ENCODE measurements at regions of chr14 and their contacts with region 1.

Region 1: DNA sequence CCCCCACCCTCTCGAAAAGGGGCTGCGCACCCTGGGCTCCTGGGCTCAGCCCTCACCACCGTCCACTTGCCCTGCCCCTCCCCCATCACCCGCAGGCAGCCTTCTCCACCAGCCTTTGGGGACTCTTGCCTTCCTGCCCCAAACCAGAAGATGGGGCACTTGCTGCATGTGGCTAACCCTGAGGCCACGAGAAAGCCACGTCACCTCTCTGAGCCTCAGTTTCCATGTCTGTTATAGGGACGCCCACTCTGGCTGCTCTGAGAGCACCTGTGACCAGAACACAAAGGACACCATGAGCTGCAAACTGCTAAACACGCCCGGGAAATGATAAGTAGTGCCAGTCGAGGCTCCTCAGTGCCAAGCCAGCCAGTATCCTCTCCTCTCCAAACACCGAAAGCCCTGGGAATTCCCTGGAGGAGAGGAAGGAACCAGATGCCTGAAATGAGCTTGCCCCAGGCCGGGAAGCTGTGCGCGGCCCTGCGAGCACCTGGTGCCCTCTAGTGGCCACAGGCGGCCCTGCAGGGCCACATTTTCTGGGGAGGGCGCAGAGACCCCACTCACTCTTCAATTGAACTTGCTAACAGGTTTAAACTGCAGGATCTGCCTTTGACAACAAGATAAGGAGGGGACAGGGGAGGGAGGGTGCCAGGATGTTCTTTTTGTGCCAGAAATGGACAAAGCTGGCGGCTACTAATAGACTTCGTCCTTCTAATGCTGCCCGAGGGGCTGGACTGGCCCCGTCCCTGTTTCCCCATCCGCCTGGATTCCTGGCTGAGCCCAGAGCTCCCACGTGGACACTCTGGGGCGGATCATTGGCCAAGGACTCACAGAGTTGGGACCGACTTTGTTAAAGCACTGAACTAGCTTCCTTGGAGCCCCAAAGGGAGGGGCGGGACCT is 10.2 kb upstream of the SERPINA9 start:
- DNase-seq: peak; percentile 50
- ATAC-seq: peak; percentile 43
- H3K4me3 Mint-ChIP-seq: peak overlapping the region; percentile 52
- H3K27ac Mint-ChIP-seq: no peak overlapping the region
- H3K4me1 Mint-ChIP-seq: peaks cover 34% of the 10 kb centered on the region
- H3K27me3 Mint-ChIP-seq: peaks cover 18% of the 10 kb centered on the region
- CTCF ChIP-seq: peak; percentile 98

Region 2: GRCh38 chr14:94036313-94037050 is 449.7 kb before region 1 on chr14:
- CTCF ChIA-PET with region 1: interaction called, 4 read pairs
- POLR2A ChIA-PET with region 1: interaction called, 4 read pairs
- intact Hi-C with region 1: loop called (anchors 2 kb)
- DNase-seq: peak; percentile 60
- ATAC-seq: peak; percentile 95
- H3K4me3 Mint-ChIP-seq: no peak overlapping the region
- H3K27ac Mint-ChIP-seq: no peak overlapping the region
- H3K4me1 Mint-ChIP-seq: no peaks in the 10 kb centered on the region
- H3K27me3 Mint-ChIP-seq: no peaks in the 10 kb centered on the region
- CTCF ChIP-seq: peak; percentile 21

Region 3: GRCh38 chr14:94180655-94181271 is 305.4 kb before region 1 on chr14:
- CTCF ChIA-PET with region 1: no interaction called
- POLR2A ChIA-PET with region 1: no interaction called
- intact Hi-C with region 1: no loop called
- DNase-seq: no peak
- ATAC-seq: peak; percentile 66
- H3K4me3 Mint-ChIP-seq: no peak overlapping the region
- H3K27ac Mint-ChIP-seq: no peak overlapping the region
- H3K4me1 Mint-ChIP-seq: peaks cover 9% of the 10 kb centered on the region
- H3K27me3 Mint-ChIP-seq: peaks cover 39% of the 10 kb centered on the region
- CTCF ChIP-seq: peak; percentile 46

Region 4: DNA sequence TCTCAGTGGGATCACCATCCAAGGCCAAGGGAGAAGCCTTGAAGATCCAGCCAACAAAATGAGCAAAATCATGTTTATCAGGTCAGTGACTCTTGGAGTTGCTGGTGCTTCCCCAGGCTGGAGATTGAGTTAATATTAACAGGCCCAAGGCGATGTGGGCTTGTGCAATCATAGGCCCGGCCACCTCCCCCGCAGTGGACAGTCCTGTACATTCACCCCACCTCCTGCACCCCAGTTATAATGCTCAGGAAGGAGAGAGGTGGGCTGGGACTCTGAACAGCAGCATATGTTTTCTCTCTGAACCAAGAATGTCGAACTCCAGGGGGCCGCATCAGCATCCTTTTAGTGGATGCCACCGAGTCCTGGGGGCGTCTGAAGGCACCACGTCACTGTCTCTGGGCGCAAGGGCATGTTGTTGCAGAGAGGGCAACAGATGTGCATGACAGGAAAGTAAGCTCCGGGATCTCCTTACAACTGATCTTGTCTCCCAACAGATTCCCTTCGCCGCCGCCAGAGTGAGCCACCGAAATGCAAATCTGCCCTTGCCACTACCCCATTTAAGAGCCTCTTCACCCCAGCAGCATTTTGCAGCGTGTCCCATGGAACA is 130.9 kb before region 1 on chr14:
- CTCF ChIA-PET with region 1: no interaction called
- POLR2A ChIA-PET with region 1: no interaction called
- intact Hi-C with region 1: loop called (anchors 10 kb)
- DNase-seq: no peak
- ATAC-seq: no peak
- H3K4me3 Mint-ChIP-seq: no peak overlapping the region
- H3K27ac Mint-ChIP-seq: no peak overlapping the region
- H3K4me1 Mint-ChIP-seq: no peaks in the 10 kb centered on the region
- H3K27me3 Mint-ChIP-seq: peaks cover 3% of the 10 kb centered on the region
- CTCF ChIP-seq: no peak

Region 5: GRCh38 chr14:94439453-94440057 is 46.6 kb before region 1 on chr14:
- CTCF ChIA-PET with region 1: interaction called, 72 read pairs
- POLR2A ChIA-PET with region 1: no interaction called
- intact Hi-C with region 1: loop called (anchors 1 kb)
- DNase-seq: no peak
- ATAC-seq: no peak
- H3K4me3 Mint-ChIP-seq: no peak overlapping the region
- H3K27ac Mint-ChIP-seq: no peak overlapping the region
- H3K4me1 Mint-ChIP-seq: no peaks in the 10 kb centered on the region
- H3K27me3 Mint-ChIP-seq: peaks cover 3% of the 10 kb centered on the region
- CTCF ChIP-seq: no peak

Region 6: GRCh38 chr14:94548999-94549985 is 63.1 kb after region 1 on chr14:
- CTCF ChIA-PET with region 1: interaction called, 3 read pairs
- POLR2A ChIA-PET with region 1: no interaction called
- intact Hi-C with region 1: loop called (anchors 1 kb)
- DNase-seq: peak; percentile 31
- ATAC-seq: peak; percentile 31
- H3K4me3 Mint-ChIP-seq: no peak overlapping the region
- H3K27ac Mint-ChIP-seq: no peak overlapping the region
- H3K4me1 Mint-ChIP-seq: no peaks in the 10 kb centered on the region
- H3K27me3 Mint-ChIP-seq: peaks cover 10% of the 10 kb centered on the region
- CTCF ChIP-seq: no peak